Dorsolateral prefrontal cortex (tissue), 120 donors: ENCODE measurements at regions of chr17 and their contacts with region 1.

Region 1: DNA sequence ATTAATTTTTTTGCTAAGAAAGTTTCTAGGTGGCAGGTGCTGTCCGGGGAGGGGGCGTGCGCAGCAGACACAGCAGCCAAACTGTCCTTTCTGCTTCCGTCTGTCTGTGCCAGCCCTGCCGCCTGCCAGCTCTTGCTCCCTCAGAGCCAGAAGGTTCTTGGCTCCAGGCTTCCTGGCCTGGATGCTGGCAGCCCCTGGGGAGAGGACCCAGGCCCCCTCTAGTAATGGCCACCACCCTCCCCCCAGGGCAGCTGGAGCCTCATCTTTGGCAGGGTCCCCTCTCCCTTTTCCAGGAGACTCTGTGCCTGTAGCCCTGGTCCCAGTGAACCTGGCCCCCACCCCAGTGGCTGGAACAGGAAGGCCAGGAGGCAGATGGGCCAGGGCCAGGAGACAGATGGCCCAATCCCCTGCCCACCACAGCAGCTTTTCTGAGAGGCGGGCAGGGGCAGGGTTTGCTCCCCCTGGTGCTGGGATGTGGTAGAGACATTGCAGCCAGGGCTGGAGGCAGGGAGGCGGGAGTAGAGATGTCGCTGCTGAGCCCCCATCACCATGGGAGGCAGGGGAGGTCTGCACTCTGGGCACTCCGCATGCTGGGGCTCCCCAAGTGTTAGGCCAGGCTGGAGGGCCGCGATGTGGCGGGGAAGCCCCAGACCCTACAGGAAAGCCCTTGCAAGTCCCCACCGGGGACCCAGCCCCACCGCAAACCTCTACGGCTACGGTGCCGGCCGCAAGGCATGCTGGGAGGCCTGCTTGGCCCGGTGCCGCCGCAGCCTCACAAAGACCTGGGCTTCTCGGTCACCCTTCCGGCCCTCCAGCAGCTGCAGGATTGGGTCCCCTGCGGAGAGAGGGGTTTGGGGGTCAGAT is 16.7 kb downstream of the UNC13D start:
- DNase-seq: peak in 9 of 10 donors; percentile 35 to 81 (median 65)
- H3K4me3 ChIP-seq: peak overlapping the region in 49 of 59 donors; percentile 0 to 59 (median 36)
- H3K27ac ChIP-seq: peak overlapping the region; percentile 65 to 96 (median 83)
- H3K27me3 ChIP-seq: no peaks in the 10 kb centered on the region
- CTCF ChIP-seq: peak in 55 of 56 donors; percentile 42 to 83 (median 64)

Region 2: DNA sequence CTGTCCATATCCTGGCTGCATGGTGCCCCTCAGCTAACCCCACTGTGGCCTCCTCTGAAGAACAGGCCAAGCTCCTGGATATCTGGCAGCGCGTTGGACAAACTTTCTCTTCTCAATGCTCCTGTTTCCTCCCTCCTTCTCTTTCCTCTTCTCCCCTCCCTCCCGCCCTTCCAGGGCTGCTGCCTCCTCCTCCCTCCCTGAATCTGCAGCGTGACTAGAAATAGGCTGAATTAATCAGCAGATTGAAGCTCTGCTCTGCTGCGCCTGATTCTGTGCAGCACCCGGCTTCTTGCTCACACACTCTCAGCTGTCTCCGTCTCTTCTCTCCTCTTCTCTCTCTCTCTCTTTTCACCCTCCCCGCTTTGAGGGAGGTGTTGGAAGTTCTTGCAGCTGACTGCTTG is 351.2 kb before region 1 on chr17:
- intact Hi-C with region 1: no loop called
- DNase-seq: peak in 9 of 10 donors; percentile 21 to 87 (median 79)
- H3K4me3 ChIP-seq: peak overlapping the region in 53 of 59 donors; percentile 1 to 60 (median 38)
- H3K27ac ChIP-seq: peak overlapping the region in 58 of 59 donors; percentile 46 to 96 (median 88)
- H3K27me3 ChIP-seq: no peaks in the 10 kb centered on the region
- CTCF ChIP-seq: peak in 3 of 56 donors; percentile 6 to 16 (median 7)

Region 3: DNA sequence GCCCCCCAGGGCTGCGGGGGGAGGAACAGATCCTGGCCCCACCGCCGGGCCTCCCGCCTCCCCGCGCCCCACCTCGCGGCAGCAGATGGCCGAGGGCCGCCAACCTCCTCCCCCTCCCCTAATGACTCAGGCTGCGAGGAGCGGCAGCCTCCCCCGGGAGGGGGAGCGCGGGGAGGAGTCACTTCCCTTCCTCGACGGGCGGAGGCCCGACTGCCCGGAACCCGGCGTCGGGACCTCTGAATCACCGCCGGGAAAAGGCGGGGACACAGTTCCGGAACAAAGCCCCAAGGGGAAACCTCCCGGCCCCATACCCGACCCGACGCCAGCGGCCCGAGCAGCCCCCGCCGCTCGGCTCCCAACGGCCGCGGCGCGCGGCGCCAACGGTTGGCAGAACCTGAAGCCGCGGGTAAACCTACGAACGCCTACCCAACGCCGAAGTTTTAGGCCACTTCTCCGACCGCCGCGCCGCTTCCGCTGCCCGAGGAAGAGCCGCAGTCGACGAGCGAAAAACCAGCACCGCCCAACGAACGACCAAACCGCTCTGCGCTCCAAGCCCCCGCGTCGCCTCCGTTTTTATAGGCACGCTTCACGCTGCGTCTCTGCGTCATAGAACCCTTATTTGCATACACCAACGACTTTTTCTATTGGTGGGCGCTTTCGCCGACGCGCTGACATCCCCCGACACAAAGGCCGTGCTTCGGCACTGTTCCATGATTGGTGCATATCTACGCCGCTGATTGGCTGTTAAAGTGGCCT is 48.1 kb before region 1 on chr17:
- intact Hi-C with region 1: loop called in 1 of 2 experiments (anchors 10 kb)
- DNase-seq: peak; percentile 90 to 99 (median 98)
- H3K4me3 ChIP-seq: peak overlapping the region; percentile 58 to 100 (median 94)
- H3K27ac ChIP-seq: peak overlapping the region; percentile 76 to 99 (median 97)
- H3K27me3 ChIP-seq: no peaks in the 10 kb centered on the region
- CTCF ChIP-seq: peak in 16 of 56 donors; percentile 2 to 42 (median 10)

Region 4: GRCh38 chr17:76111956-76112355 is 284.5 kb after region 1 on chr17:
- intact Hi-C with region 1: no loop called
- DNase-seq: no peak
- H3K4me3 ChIP-seq: no peak overlapping the region
- H3K27ac ChIP-seq: no peak overlapping the region
- H3K27me3 ChIP-seq: no peaks in the 10 kb centered on the region
- CTCF ChIP-seq: no peak